Astrocyte of the cerebellum (primary cell): ENCODE measurements at regions of chr7 and their contacts with region 1.

Region 1: DNA sequence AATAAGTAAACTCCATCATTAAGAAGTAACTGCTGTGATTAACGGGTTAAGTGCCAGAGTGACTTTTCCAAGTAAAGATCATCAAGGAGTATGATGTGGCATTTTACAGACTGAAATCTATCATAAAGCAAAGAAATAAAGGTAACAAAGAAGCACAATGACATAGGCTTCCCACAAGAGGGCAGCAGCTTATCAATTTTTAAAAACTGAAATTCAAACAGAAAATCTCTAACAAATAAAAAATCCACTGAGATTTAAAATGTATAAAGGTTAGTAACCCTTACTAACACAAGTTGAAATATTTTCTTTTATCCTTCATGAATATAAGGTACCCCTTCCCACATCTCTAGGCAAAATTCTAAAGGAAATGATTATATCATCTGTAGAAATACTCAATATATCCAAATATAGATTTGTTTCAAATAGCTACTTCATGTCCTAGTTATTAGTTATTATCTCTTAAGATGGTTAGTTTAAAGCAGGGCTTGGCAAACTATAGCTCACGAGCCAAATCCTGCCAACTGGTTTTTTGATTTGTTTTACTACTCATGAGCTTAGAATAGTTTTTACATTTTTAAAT is 29.2 kb downstream of the FAM3C start:
- DNase-seq: peak; percentile 40
- H3K4me3 ChIP-seq: no peak overlapping the region
- CTCF ChIP-seq: peak; percentile 54

Region 2: GRCh38 chr7:121398246-121398645 is 31.3 kb after region 1 on chr7:
- in situ Hi-C with region 1: no loop called
- DNase-seq: no peak
- H3K4me3 ChIP-seq: no peak overlapping the region
- CTCF ChIP-seq: peak; percentile 33

Region 3: DNA sequence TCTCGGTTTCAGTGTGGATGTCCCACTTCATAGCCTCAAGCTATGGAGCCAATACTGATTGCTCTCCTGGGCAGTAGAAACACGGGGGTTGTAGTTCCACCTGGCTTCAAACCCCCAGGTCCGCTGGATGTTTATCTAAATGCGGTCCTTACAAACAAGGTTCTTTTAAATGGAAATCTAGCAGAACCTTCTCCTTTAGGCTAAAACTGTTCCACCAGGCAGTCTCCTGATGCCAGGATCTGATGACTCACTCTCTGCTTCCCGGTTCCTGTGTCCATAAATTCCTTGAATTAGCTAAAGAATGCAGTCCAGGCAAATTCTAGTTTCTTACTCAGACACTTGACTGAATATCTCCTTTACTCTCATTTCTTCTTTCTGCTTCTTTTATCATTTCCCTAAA is 137.5 kb after region 1 on chr7:
- in situ Hi-C with region 1: no loop called
- DNase-seq: peak; percentile 78
- H3K4me3 ChIP-seq: no peak overlapping the region
- CTCF ChIP-seq: no peak

Region 4: GRCh38 chr7:121563177-121563576 is 196.2 kb after region 1 on chr7:
- in situ Hi-C with region 1: loop called (anchors 25 kb)
- DNase-seq: no peak
- H3K4me3 ChIP-seq: no peak overlapping the region
- CTCF ChIP-seq: peak; percentile 32

Region 5: DNA sequence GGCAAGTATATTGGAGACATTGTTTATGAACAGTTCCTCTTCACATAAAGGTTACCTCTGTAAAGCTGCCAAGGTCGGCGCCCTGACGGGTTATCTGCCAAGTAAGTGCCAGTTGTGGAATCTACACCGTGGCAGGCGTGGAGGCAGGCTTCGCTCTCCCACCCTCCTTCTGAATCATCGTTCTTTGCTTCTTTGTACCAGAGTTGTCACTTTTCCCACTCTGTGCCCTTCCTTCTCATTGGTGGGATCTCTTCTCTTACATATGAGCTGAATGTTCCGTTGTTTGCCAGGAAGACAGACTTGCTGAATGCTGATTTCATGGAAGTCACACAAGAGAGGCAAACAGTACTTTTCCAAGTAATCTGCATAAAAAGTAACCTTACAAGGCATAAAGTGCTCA is 465.4 kb after region 1 on chr7:
- in situ Hi-C with region 1: no loop called
- DNase-seq: no peak
- H3K4me3 ChIP-seq: no peak overlapping the region
- CTCF ChIP-seq: no peak